Kidney (tissue), 22 donors: ENCODE measurements at regions of chr10 and their contacts with region 1.

Region 1: DNA sequence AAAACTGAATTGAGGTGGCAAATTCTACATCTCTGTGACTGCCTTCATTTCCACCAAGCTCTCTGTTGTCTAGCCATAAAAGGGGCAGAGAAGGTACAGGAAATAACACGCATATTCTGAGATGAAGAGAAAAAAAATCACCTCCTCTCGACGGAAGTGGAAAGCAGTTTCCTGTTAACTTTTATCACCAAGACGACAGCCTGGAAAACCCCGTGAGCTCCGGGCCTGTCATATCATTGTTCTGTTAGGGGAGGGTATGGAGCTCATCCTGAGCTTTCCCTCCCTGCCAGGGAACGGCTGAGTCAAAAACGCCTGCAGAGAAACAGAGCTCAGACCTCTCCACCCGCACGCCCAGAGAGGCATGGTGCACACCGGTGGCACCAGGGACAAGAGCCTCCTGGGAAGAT is 200.3 kb downstream of the PRPF18 start:
- DNase-seq: peak in 1 of 5 donors; percentile 72
- H3K4me3 ChIP-seq: no peak overlapping the region
- H3K27ac ChIP-seq: peak overlapping the region in 1 of 2 donors; percentile 3
- H3K4me1 ChIP-seq: peaks cover 2 to 14% (median 10%) of the 10 kb centered on the region in 3 donors
- H3K27me3 ChIP-seq: no peaks in the 10 kb centered on the region
- CTCF ChIP-seq: no peak

Region 2: DNA sequence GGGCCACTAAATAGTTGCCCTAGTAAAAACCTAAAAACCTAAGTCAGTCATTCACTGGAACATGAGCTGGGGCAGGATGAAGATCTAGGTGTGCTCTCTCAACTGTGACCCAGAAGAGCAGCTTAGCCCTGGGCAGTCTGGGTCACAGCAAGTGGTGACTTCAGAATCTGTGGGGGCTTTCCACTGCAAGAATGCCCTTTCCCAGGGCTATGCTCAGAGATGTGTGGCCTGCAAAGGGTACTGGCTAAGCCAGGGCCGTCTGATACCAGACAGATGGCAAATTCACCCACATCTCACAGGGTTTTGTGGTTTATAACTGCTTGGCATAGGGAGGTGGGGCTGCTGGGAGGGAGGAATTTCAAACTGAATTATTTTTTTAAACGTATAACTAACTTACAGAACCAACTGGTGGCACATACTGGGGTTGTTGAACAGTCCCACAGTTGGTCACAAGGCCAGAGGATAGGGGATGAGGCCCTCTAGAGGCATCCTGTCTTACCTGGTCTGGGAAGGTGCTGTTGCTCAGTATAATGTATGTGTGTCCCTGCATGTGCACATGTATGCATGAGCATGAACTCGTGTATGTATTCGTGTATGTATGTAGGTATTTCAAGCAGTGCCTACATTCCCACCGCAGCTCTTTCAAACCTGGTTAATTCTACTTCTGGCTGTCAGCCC is 137.0 kb before region 1 on chr10:
- intact Hi-C with region 1: no loop called
- DNase-seq: no peak
- H3K4me3 ChIP-seq: no peak overlapping the region
- H3K27ac ChIP-seq: no peak overlapping the region
- H3K4me1 ChIP-seq: peaks cover 0 to 2% (median 0%) of the 10 kb centered on the region in 3 donors
- H3K27me3 ChIP-seq: no peaks in the 10 kb centered on the region
- CTCF ChIP-seq: no peak

Region 3: GRCh38 chr10:14093730-14094484 is 306.9 kb after region 1 on chr10:
- intact Hi-C with region 1: loop called (anchors 10 kb)
- DNase-seq: peak in 4 of 5 donors; percentile 18 to 84 (median 65)
- H3K4me3 ChIP-seq: no peak overlapping the region
- H3K27ac ChIP-seq: no peak overlapping the region
- H3K4me1 ChIP-seq: peaks cover 0 to 2% (median 0%) of the 10 kb centered on the region in 3 donors
- H3K27me3 ChIP-seq: no peaks in the 10 kb centered on the region
- CTCF ChIP-seq: peak; percentile 46